ENCODE measurements at regions of chr7 and their contacts with region 1.

Region 1: GRCh38 chr7:69211739-69212138 is 386.5 kb upstream of the AUTS2 start:
- DNase-seq: peak; percentile 82
- H3K4me3 ChIP-seq: no peak overlapping the region
- H3K27ac ChIP-seq: no peak overlapping the region
- H3K4me1 ChIP-seq: peaks cover 30% of the 10 kb centered on the region
- CTCF ChIP-seq: peak; percentile 75

Region 2: DNA sequence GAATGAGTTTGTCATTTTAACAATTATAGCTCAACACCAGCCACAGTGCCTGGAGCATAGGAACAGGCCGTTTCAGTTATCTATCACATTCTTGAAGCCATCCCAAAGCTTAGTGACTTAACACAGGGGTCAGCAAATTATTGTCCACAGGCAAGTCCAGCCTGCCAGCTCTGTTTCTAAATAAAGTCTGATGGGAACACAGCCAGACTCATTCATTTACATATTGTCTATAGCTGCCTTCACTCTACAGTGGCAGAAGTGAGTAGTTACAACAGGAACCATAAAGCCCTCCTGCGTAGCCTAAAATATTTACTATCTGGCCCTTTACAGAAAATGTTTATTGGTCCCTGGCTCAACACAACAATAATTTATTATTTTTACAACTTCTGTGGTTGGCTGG is 21.0 kb before region 1 on chr7:
- CTCF ChIA-PET with region 1: no interaction called
- POLR2A ChIA-PET with region 1: interaction called, 10 read pairs
- intact Hi-C with region 1: no loop called
- DNase-seq: no peak
- H3K4me3 ChIP-seq: no peak overlapping the region
- H3K27ac ChIP-seq: no peak overlapping the region
- H3K4me1 ChIP-seq: peaks cover 14% of the 10 kb centered on the region
- CTCF ChIP-seq: no peak

Region 3: GRCh38 chr7:69395061-69395714 is 183.4 kb after region 1 on chr7:
- CTCF ChIA-PET with region 1: no interaction called
- POLR2A ChIA-PET with region 1: no interaction called
- intact Hi-C with region 1: no loop called
- DNase-seq: no peak
- H3K4me3 ChIP-seq: no peak overlapping the region
- H3K27ac ChIP-seq: no peak overlapping the region
- H3K4me1 ChIP-seq: no peaks in the 10 kb centered on the region
- CTCF ChIP-seq: no peak